Left colon (tissue), 2 donors: ENCODE measurements at regions of chr4 and their contacts with region 1.

Region 1: GRCh38 chr4:37389967-37390580 is 145.5 kb downstream of the NWD2 start:
- DNase-seq: peak in 1 of 2 donors; percentile 30
- ATAC-seq: peak; percentile 89

Region 2: DNA sequence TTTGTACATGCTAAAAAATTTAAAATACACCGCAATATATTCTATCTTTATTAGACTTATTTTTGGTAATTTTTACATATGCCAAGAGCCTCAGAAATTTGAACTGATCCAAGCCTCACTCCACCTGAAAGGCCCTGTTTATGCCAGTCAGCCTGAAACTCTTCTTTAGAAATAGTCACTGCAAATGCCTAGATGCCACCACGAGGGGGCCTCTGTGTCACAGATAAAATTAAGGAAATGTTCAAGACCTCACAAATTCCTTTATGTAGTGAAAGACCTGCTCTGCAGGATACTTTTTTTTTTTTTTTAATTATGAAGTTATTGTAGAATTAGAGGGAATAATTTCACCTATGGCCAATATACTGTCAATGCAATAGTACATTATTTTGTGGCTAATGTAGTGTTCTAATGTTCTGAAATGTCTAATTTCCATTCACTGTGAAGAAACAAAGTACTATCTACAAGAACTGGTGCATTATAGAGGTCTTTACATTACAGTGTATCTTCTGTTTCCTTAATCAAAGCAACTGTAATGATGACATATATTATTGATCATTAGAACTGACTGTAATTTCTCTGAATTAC is 1038.9 kb before region 1 on chr4:
- intact Hi-C with region 1: loop called in 1 of 2 experiments (anchors 10 kb)
- DNase-seq: peak; percentile 30 to 78
- ATAC-seq: peak; percentile 69

Region 3: DNA sequence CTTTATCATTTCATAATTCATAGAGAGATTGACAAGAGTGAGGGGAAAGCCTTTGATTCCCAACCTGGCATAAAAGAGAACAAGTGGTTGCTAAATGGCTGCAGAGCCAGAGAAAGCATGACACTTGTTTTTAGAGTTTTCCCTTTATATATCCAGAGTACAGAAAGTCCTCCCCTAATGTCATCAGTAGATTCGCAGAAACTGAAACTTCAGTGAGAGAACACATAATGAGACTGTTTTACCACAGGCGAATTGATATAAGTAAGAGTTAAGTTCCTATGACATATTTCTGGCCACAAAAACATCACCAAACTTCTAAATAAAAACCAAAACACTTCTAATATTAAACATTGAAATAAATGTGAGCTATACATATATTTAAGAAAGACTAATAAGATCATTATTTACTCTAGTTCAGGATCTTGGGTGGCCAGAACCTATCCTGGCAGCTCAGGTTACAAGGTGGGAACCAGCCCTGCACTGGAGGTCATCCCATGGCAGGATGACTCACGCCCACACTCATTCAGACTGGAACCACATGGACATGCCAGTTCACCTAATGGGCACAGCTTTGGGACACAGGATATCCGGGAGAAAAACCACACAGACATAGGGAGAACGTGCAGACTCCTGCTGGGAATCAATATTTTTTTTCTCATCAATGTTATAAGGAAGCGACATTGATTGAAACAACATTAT is 110.0 kb before region 1 on chr4:
- intact Hi-C with region 1: no loop called
- DNase-seq: no peak
- ATAC-seq: no peak